ENCODE measurements at regions of chr7 and their contacts with region 1.

Region 1: GRCh38 chr7:100342765-100343164 is 15.2 kb upstream of the PILRB start:
- DNase-seq: no peak
- ATAC-seq: peak; percentile 46

Region 2: GRCh38 chr7:100148559-100149350 is 194.0 kb before region 1 on chr7 and contains the start of gene LAMTOR4:
- intact Hi-C with region 1: loop called (anchors 10 kb)
- DNase-seq: peak; percentile 99
- ATAC-seq: peak; percentile 100
- total RNA-seq, gene LAMTOR4: 99.4 TPM

Region 3: GRCh38 chr7:100215895-100216294 is 126.9 kb before region 1 on chr7:
- intact Hi-C with region 1: loop called (anchors 10 kb)
- DNase-seq: no peak
- ATAC-seq: peak; percentile 68

Region 4: DNA sequence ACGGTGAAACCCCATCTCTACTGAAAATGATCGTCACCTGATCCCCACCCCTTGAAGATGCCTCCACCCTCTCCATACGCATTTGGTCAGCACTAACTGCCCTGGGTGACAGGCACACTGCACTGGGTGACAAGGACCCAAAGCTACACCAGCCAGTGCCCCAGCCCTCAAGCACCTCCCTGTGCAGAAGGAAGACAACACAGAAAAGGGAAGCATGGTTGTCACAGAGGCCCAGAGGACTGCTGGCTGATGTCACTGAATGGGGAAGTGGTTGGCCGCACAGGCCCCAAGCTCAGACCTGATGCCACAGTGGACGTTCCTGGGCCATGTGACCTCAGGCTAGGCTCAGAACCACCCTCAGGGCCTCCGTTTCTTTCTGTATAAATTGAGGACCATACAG is 26.3 kb after region 1 on chr7:
- intact Hi-C with region 1: no loop called
- DNase-seq: peak; percentile 92
- ATAC-seq: peak; percentile 71